PC-3 (cell line): ENCODE measurements at regions of chr14 and their contacts with region 1.

Region 1: DNA sequence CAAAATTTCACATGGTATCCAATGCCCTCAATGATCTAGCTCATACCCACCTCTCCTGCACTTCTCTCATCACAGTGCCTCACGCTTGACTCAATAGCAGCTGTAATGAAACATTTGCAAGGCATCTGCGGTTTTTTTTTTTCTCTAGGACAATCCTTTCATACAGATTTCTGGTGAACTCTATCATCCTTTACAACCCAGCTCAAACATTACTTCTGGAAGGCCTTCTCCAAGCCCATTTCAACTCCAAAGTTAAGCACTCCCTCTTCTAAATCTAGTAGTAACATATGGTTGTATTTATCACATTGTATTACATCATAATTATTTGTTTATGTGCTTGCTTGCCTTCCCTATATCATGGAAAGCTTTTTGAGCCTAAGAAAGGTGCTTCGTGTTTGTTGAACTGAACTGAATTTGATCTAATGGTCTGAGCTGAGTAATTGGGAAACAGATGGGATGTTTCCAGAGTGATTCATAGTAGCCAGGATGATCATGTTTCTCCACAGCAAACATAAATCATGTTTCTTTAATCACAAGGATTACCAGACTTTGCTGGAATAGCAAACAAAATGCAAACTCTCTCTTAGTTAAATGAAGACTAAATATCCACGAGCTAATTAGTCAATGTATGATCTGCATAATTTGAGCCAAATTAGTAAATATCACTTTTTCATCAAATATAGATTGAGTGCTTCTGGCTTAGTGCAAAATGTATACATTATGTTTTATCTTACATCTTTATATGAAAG is 14.3 kb downstream of the CFL2 start:
- DNase-seq: peak; percentile 92
- ATAC-seq: peak; percentile 91
- H3K4me3 ChIP-seq: peak overlapping the region; percentile 60
- H3K27ac ChIP-seq: peak overlapping the region; percentile 87
- H3K4me1 ChIP-seq: peaks cover 38% of the 10 kb centered on the region
- H3K27me3 ChIP-seq: no peaks in the 10 kb centered on the region
- CTCF ChIP-seq: no peak

Region 2: GRCh38 chr14:34678306-34678705 is 21.7 kb before region 1 on chr14:
- CTCF ChIA-PET with region 1: interaction called, 8 read pairs
- POLR2A ChIA-PET with region 1: no interaction called
- intact Hi-C with region 1: loop called (anchors 1 kb)
- DNase-seq: no peak
- ATAC-seq: peak; percentile 16
- H3K4me3 ChIP-seq: no peak overlapping the region
- H3K27ac ChIP-seq: peak overlapping the region; percentile 58
- H3K4me1 ChIP-seq: peaks cover 21% of the 10 kb centered on the region
- H3K27me3 ChIP-seq: no peaks in the 10 kb centered on the region
- CTCF ChIP-seq: no peak

Region 3: DNA sequence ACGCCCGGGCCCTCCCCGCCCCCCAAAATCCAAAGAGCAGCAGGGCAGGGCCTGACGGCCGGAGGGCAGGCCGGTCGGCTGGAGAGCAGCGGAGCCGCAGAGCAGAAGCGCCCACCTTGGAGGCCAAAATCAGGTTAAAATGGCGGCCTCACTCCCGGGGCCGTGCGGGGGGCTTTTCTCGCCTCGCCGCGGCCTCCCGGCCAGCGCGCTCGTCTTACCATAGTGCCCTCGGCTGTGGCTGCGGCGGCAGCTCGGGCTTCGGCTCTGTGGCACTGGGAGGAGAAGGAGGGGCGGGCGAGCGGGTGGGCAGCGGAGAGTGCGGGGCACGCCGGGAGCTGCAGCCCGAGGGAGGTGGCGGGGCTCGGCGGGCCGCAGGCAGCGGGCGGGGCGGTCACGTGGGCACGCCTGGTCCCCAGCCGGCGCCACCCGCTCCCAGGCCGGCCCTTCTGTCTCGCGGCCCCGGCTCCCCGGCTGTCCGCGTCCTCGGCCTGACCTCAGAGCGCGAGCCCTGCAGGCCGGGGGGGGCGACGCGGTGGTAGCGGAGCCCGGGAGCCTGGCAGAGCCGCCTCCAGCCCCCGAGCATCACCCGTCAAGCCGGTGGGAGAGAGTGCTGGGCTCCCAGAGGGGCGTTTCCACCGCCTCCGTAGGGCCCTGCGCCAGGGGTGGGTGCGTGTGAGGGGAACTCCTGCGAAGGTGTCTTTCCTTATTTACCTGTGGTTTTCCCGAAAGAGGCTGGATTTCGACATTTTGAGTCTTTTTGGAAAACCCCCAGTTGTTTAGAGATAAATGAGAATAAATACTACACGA is 14.5 kb after region 1 on chr14 and contains the start of gene CFL2:
- CTCF ChIA-PET with region 1: no interaction called
- POLR2A ChIA-PET with region 1: interaction called, 17 read pairs
- intact Hi-C with region 1: loop called (anchors 1 kb)
- DNase-seq: peak; percentile 75
- ATAC-seq: peak; percentile 89
- H3K4me3 ChIP-seq: peak within 1 kb of the TSS; percentile 89
- H3K27ac ChIP-seq: peak within 1 kb of the TSS; percentile 51
- H3K4me1 ChIP-seq: peaks cover 33% of the 10 kb centered on the region
- H3K27me3 ChIP-seq: no peaks in the 10 kb centered on the region
- CTCF ChIP-seq: no peak
- total RNA-seq, gene CFL2: 88.4 and 98.0 TPM in 2 replicates

Region 4: DNA sequence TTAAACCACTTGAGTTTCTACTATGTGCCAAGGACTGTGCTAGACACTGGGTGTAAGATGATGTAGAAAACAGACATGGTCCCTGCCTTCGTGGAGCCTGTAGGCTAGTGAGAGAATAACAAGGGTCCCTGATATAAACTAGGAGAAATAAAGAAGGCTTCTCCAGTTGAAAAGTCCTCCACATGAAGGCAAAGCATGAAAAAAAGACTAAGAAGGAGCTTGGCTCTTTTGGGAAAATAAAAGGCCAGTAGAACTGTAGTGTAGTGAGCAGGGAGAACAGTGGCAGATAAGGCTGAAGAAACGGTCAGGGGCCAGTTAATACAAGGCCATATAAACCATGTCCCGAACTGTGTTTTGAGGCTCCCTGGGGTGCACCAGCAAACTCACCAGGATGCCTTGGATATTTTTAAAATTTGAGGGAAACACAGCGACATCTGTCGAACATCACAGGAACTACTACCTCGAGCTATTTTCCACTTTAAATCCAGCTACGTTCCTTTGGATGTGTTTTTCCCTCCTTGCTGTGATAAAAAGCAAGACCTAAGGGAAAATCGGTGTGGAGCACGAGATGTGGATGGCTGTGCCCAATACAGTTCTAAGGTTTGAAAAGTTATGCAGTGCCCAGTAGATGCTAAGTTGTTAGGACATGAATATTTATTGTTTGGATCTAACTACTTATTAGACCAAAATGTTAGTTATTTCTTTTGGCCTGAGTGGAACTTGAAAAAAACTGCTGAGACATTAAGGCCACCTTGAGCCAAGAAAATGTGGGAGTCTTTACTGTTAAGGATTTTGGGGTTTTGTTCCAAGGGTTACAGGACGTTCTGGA is 22.9 kb after region 1 on chr14:
- CTCF ChIA-PET with region 1: interaction called, 13 read pairs
- POLR2A ChIA-PET with region 1: no interaction called
- intact Hi-C with region 1: no loop called
- DNase-seq: peak; percentile 77
- ATAC-seq: peak; percentile 76
- H3K4me3 ChIP-seq: no peak overlapping the region
- H3K27ac ChIP-seq: no peak overlapping the region
- H3K4me1 ChIP-seq: 0 out of 2 replicates have a peak, but pooled peaks cover 3% of the 10 kb centered on the region
- H3K27me3 ChIP-seq: no peaks in the 10 kb centered on the region
- CTCF ChIP-seq: peak; percentile 83

Region 5: GRCh38 chr14:34766060-34766459 is 66.0 kb after region 1 on chr14:
- CTCF ChIA-PET with region 1: no interaction called
- POLR2A ChIA-PET with region 1: interaction called, 11 read pairs
- intact Hi-C with region 1: no loop called
- DNase-seq: peak; percentile 47
- ATAC-seq: peak; percentile 37; the same call in 1 of the 2 replicates
- H3K4me3 ChIP-seq: no peak overlapping the region
- H3K27ac ChIP-seq: no peak overlapping the region
- H3K4me1 ChIP-seq: no peaks in the 10 kb centered on the region
- H3K27me3 ChIP-seq: no peaks in the 10 kb centered on the region
- CTCF ChIP-seq: peak; percentile 74